Psoas muscle (tissue), 8 donors: ENCODE measurements at regions of chr17 and their contacts with region 1.

Region 1: DNA sequence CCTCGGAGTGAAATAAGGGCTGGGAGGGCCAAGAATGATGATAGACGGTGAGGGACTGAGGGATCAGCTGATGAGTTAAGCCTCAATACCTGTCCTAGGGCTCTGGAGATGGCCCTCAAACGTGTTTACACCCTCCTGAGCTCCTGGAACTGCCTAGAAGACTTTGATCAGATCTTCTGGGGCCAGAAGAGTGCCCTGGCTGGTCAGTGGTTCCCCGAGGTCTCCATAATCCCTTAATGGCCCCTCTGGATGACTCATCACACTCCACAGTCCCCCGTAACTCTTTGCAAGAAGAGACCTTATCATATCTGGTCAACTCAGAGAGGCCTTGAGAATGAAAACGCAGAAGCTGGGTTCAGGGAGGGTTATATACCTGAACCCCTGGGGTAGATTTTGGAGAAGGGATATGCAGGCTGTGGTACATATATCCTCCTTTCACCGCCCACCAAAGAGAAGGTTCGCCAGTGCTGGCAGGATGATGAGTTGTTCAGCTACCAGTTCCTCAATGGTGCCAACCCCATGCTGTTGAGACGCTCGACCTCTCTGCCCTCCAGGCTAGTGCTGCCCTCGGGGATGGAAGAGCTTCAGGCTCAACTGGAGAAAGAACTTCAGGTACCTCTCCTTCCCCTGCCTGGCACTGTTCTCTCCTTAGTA is 3.1 kb downstream of the ALOX12 start:
- DNase-seq: no peak
- ATAC-seq: no peak
- H3K4me3 ChIP-seq: no peak overlapping the region
- H3K27ac ChIP-seq: no peak overlapping the region
- H3K4me1 ChIP-seq: no peaks in the 10 kb centered on the region
- H3K27me3 ChIP-seq: peaks cover 0 to 4% (median 0%) of the 10 kb centered on the region in 3 donors
- CTCF ChIP-seq: no peak

Region 2: DNA sequence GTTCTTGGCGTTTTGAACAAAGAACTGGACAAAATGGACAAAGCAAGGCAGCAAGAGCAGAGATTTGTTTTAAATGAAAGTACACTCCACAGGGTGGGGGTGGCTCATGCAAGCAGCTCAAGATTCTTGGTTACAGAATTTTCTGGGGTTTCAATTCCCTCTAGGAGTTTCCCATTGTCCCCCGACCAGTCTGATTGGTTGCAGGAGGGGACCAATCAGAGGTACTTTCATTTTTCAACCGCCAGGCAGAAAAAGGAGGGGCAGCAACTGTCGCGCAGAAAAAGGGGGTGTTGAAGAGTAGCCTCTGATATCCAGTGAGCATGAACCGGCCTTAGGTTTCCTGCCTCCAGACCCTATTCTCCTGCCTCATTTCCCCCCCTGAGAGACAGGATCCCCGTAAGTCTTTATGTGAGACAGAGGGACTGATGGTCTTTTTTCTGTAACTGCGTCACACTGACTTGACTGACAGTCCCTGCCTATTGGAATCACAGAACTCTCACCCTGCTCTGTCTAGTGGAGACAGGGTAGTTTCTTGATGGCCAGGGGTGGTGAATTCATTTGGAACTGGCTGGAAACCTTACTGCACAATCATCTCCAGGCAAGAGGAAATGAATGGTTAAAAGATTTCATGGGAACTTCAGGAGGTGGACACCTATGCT is 62.5 kb before region 1 on chr17:
- intact Hi-C with region 1: no loop called
- DNase-seq: no peak
- ATAC-seq: peak; percentile 53 to 90 (median 68)
- H3K4me3 ChIP-seq: peak overlapping the region; percentile 73
- H3K27ac ChIP-seq: peak overlapping the region; percentile 64
- H3K4me1 ChIP-seq: peaks cover 3% of the 10 kb centered on the region
- H3K27me3 ChIP-seq: no peaks in the 10 kb centered on the region
- CTCF ChIP-seq: no peak

Region 3: DNA sequence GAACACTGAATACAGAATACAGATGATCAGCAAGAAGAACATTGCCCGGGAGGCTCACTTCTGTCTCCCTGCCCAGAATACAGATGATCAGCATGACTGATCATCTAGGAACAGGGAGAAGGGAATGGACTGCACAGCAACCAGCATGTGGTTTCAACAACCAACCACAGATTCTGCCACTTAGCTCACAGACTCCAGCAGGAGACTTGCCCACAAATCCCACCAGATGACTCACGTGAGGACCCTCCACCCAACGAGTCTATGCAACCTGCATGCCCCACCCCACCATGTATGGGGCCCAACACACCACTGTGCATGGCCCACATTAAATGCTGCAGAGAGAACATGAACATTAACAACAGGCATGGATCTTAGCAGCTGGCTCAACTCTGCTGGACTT is 39.3 kb before region 1 on chr17:
- intact Hi-C with region 1: loop called in 1 of 2 experiments (anchors 2 kb)
- DNase-seq: no peak
- ATAC-seq: no peak
- H3K4me3 ChIP-seq: no peak overlapping the region
- H3K27ac ChIP-seq: no peak overlapping the region
- H3K4me1 ChIP-seq: no peaks in the 10 kb centered on the region
- H3K27me3 ChIP-seq: peaks cover 0 to 4% (median 2%) of the 10 kb centered on the region in 3 donors
- CTCF ChIP-seq: no peak